ENCODE measurements at regions of chr9 and their contacts with region 1.

Region 1: DNA sequence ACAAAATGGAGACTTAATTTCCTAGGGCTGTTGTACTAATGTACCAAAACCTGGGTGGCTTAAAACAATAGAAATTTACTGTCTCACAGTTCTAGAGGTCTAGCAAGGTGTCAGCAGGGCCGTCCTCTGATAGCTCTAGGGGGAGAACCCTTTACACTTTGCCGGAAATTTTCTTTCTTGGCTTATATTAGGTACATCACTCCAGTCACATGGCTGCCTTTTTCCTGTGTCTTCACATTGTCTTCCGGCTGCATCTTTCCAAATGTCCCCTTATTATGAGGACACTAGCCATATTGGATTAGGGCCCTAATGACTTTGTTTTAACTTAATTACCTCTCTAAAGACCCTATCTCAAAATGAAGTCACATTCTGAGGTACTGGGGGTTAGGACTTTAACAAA is 5.8 kb downstream of the UHRF2 start:
- DNase-seq: no peak
- H3K4me3 Mint-ChIP-seq: peak overlapping the region; percentile 62
- H3K27ac Mint-ChIP-seq: peak overlapping the region; percentile 83
- H3K4me1 Mint-ChIP-seq: peaks cover 59% of the 10 kb centered on the region
- H3K27me3 Mint-ChIP-seq: no peaks in the 10 kb centered on the region

Region 2: GRCh38 chr9:6428940-6429889 is 10.5 kb after region 1 on chr9:
- CTCF ChIA-PET with region 1: interaction called, 3 read pairs
- POLR2A ChIA-PET with region 1: interaction called, 13 read pairs
- intact Hi-C with region 1: loop called (anchors 1 kb)
- DNase-seq: peak; percentile 25
- H3K4me3 Mint-ChIP-seq: peak overlapping the region; percentile 20
- H3K27ac Mint-ChIP-seq: peak overlapping the region; percentile 49
- H3K4me1 Mint-ChIP-seq: peaks cover 76% of the 10 kb centered on the region
- H3K27me3 Mint-ChIP-seq: no peaks in the 10 kb centered on the region

Region 3: DNA sequence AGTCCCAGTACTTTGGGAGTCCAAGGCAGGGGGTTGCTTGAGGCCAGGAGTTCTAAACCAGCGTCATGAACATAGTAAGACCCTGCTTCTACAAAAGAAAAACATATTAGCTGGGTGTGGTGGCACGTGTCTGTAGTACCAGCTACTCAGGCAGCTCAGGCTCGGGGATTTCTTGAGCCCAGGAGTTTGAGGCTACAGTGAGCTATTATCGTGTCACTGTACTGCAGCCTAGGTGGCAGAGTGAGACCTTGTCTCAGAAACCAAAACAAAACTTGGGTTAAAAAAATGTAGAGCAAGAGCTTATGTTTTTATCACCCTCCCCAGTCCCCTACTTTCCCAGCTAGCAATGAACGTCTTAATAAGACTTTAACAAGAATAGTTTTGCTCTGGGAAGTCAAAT is 41.0 kb after region 1 on chr9:
- CTCF ChIA-PET with region 1: no interaction called
- POLR2A ChIA-PET with region 1: no interaction called
- intact Hi-C with region 1: no loop called
- DNase-seq: no peak
- H3K4me3 Mint-ChIP-seq: no peak overlapping the region
- H3K27ac Mint-ChIP-seq: no peak overlapping the region
- H3K4me1 Mint-ChIP-seq: peaks cover 41% of the 10 kb centered on the region
- H3K27me3 Mint-ChIP-seq: no peaks in the 10 kb centered on the region